Naive thymus-derived CD4-positive, alpha-beta T cell (primary cell): ENCODE measurements at regions of chr12 and their contacts with region 1.

Region 1: DNA sequence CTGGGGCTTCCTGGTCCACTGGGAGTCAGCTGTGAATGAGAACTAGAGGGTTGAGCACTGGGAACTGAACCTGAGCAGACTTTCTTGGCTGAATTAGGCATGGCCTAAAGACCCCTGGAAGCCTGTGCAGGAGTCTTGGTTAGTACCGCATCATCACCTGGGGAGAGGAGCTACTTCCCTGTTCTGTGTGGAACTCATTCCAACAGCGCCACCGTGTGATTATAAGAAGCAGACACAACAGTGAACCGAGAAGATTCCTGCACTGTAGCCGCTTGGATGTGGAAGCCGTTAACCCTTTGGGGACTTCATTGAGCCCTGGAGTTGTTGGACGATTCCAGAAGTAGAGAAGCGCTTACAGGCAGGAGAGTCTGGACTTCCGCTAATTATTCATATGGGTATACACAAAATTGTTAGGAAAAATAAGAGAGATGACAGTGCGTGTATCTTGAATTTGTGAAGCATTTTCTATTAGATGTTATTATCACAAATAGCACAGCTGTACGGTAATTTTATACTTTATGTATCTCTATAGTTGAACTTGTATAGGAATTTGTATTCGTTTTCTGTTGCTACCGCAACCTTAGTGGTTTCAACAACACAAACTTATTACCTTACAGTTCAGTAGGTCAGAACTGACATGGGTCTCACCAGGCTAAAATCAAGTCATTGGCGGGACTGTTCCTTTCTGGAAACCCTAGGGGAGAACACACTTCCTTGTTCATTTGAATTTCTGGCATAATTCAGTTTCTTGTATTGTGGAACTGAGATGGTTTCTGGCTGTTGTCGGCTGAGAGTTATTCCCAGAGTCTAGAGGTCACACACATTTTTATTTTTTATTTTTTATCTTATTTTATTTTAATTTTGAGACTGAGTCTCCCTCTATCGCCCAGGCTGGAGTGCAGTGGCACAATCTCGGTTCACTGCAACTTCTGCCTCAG is 100.7 kb downstream of the C2CD5 start:
- DNase-seq: peak; percentile 22 to 66 (median 58)
- ATAC-seq: peak; percentile 100
- H3K4me3 ChIP-seq: no peak overlapping the region
- H3K4me3 Mint-ChIP-seq: no peak overlapping the region
- H3K27ac ChIP-seq: no peak overlapping the region
- H3K27ac Mint-ChIP-seq: no peak overlapping the region
- H3K4me1 ChIP-seq: peaks cover 0 to 4% of the 10 kb centered on the region in 2 donors
- H3K4me1 Mint-ChIP-seq: peaks cover 0 to 10% (median 3%) of the 10 kb centered on the region in 7 donors
- H3K27me3 ChIP-seq: no peaks in the 10 kb centered on the region
- H3K27me3 Mint-ChIP-seq: peaks cover 0 to 6% (median 0%) of the 10 kb centered on the region in 5 donors

Region 2: DNA sequence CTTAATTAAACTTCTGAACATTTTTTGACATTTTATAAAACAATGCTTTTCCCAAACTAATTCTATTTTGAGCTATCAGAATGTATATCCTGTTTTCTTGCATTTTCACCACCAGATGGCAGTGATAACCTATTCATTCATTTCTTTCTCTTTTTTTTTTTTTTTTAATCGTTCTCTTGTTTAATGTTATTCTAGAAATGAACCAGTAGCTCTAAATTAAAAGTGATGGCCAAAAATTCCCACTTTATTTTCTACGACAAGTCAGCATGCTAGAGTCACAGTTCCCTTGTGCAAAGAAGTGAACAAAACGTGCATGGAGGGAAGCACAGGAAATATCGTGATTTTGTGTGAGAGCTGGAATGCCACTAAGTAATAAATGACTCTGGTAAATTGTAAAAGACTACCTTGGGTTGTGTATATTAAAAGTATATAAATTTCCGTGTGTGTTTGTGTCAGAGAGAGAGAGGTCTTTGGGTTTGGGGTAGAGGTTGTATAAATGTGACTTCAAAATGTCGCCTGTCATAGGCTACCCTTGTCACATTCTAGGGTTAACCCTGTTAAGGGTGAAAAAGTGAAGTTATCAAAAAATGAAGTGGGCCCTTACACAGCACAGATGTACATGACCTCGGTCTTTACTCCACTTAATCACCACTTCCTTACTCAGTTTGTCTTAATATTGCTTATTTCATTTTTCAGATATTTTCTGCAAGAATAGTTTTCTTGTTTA is 745.6 kb before region 1 on chr12:
- CTCF ChIA-PET with region 1: interaction called, 4 read pairs
- POLR2A ChIA-PET with region 1: no interaction called
- intact Hi-C with region 1: loop called (anchors 1 kb)
- DNase-seq: peak in 5 of 9 donors; percentile 23 to 48 (median 45)
- ATAC-seq: peak; percentile 54
- H3K4me3 ChIP-seq: no peak overlapping the region
- H3K4me3 Mint-ChIP-seq: peak overlapping the region in 6 of 10 donors; percentile 21 to 83 (median 52)
- H3K27ac ChIP-seq: no peak overlapping the region
- H3K27ac Mint-ChIP-seq: no peak overlapping the region
- H3K4me1 ChIP-seq: peaks cover 0 to 5% of the 10 kb centered on the region in 2 donors
- H3K4me1 Mint-ChIP-seq: peaks cover 0 to 22% (median 11%) of the 10 kb centered on the region in 7 donors
- H3K27me3 ChIP-seq: no peaks in the 10 kb centered on the region
- H3K27me3 Mint-ChIP-seq: peaks cover 0 to 15% (median 0%) of the 10 kb centered on the region in 5 donors

Region 3: DNA sequence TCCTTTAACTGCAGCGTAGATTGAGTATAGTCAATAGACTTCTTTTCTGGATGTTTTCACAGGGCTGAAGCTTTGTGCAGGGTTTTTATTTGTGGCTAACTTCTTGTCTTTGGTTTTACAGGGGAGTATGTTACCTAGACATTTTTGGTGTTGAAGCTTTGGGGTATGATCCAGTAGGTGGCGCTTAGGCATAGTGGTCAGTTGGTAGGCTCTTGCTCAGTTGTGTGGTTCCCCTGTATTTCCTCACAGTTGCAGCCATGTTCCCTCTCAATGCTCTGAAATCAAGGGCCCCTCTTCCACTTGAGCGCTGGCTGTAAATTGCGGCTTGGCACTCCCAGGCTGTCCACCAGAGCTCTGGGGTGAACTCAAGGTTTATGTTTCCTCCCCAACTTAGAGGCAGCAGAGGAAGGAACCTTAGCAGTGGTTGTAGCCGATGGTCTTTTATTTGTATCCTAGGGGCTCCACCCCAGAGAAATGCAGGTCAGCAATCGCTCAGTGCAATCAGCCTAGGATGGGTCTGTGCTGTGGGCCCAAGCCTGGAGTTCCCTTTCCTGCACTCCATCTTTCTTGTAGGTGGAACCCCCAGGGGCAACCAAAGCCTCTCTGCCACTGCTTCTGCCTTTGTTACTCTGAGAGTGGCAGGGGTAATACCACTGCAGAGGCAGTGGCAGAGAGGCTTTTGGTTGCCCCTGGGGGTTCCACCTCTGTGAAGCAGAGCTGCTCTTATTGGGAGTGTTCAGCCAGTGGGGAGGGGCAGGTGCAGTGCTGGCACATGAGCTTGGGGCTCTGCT is 342.5 kb before region 1 on chr12:
- CTCF ChIA-PET with region 1: interaction called, 6 read pairs
- POLR2A ChIA-PET with region 1: interaction called, 3 read pairs
- intact Hi-C with region 1: loop called (anchors 1 kb)
- DNase-seq: peak in 6 of 9 donors; percentile 12 to 47 (median 40)
- ATAC-seq: peak; percentile 78
- H3K4me3 ChIP-seq: no peak overlapping the region
- H3K4me3 Mint-ChIP-seq: no peak overlapping the region
- H3K27ac ChIP-seq: no peak overlapping the region
- H3K27ac Mint-ChIP-seq: no peak overlapping the region
- H3K4me1 ChIP-seq: peaks cover 0 to 4% of the 10 kb centered on the region in 2 donors
- H3K4me1 Mint-ChIP-seq: peaks cover 0 to 15% (median 6%) of the 10 kb centered on the region in 7 donors
- H3K27me3 ChIP-seq: no peaks in the 10 kb centered on the region
- H3K27me3 Mint-ChIP-seq: peaks cover 0 to 25% (median 0%) of the 10 kb centered on the region in 5 donors

Region 4: GRCh38 chr12:22248121-22248520 is 195.5 kb before region 1 on chr12:
- CTCF ChIA-PET with region 1: no interaction called
- POLR2A ChIA-PET with region 1: no interaction called
- intact Hi-C with region 1: loop called in 1 of 2 experiments (anchors 10 kb)
- DNase-seq: no peak
- ATAC-seq: no peak
- H3K4me3 ChIP-seq: no peak overlapping the region
- H3K4me3 Mint-ChIP-seq: no peak overlapping the region
- H3K27ac ChIP-seq: no peak overlapping the region
- H3K27ac Mint-ChIP-seq: no peak overlapping the region
- H3K4me1 ChIP-seq: no peaks in the 10 kb centered on the region
- H3K4me1 Mint-ChIP-seq: peaks cover 0 to 5% (median 2%) of the 10 kb centered on the region in 7 donors
- H3K27me3 ChIP-seq: no peaks in the 10 kb centered on the region
- H3K27me3 Mint-ChIP-seq: peaks cover 0 to 6% (median 0%) of the 10 kb centered on the region in 5 donors